Heart right ventricle (tissue), 16 donors: ENCODE measurements at regions of chr14 and their contacts with region 1.

Region 1: GRCh38 chr14:55579724-55580469 is at the start of gene KTN1:
- DNase-seq: peak; percentile 85 to 87
- ATAC-seq: peak; percentile 91 to 96 (median 94)
- H3K4me3 ChIP-seq: peak within 1 kb of the TSS; percentile 77 to 99 (median 88)
- H3K27ac ChIP-seq: peak within 1 kb of the TSS; percentile 88 to 99 (median 97)
- H3K4me1 ChIP-seq: peaks cover 0 to 51% (median 39%) of the 10 kb centered on the region in 9 donors
- H3K27me3 ChIP-seq: no peaks in the 10 kb centered on the region
- CTCF ChIP-seq: no peak
- total RNA-seq, gene KTN1: 205 to 293 (median 254) TPM

Region 2: DNA sequence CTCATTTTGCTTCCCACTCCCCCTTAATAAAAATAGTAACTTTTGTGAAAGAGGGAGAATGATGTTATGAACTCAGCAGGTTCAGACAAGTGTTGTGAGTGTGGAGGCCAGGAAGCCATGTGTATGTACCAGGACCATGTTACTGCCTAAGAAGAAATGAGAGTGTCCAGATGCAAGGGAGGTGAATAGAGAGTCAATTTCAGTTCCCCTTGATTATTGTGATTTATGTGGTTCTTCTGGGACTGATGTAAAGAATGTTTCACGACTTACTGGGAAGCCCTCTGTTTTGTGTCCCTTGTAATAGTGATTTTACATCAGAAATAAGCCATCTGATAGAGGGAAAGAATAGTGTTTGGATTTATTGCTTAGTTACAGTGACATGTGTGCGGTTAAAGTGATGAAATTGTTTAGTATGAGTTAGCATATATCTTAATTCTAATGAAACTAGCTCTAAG is 276.2 kb before region 1 on chr14:
- intact Hi-C with region 1: no loop called
- DNase-seq: no peak
- ATAC-seq: no peak
- H3K4me3 ChIP-seq: no peak overlapping the region
- H3K27ac ChIP-seq: peak overlapping the region in 3 of 10 donors; percentile 20 to 55 (median 52)
- H3K4me1 ChIP-seq: peaks cover 3 to 71% (median 43%) of the 10 kb centered on the region in 9 donors
- H3K27me3 ChIP-seq: no peaks in the 10 kb centered on the region
- CTCF ChIP-seq: no peak

Region 3: DNA sequence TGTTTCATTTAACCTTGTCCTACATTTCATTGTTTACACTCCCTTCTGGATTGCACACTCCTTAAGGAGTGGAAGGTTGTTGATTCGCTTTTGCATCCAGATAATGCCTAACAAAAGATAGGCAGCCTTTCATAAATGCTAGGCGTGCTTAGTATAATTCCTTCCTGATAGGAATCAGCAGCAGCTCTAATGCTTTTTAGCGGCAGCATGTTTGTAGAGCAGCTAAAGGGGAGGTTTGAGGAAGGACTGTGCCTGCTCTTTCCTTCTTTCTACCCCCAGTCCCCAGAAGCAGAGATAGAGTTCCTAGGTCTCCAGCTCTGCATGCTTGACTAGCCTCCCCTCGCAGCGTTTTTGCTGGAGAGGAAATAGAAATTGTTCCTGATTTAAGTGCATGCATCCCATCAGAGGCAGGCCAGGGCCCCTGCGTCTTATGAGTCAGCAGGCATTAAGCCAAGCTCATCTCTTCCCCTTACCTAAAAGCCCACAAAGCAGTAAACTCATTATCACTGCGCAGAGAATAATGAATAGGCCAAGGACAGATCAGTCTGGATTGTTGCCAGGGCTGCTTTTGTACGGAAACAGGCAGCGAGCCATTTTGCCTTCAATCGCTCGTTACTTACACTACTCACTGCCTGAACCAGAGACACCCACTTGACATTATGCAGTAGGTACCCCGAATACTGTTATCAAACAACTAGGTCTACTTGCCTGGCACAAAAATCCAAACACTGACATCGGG is 125.5 kb before region 1 on chr14:
- intact Hi-C with region 1: loop called in 7 of 10 experiments (anchors 5 to 10 kb)
- DNase-seq: peak in 1 of 2 donors; percentile 36
- ATAC-seq: peak in 7 of 8 donors; percentile 34 to 81 (median 59)
- H3K4me3 ChIP-seq: peak overlapping the region in 1 of 10 donors; percentile 20
- H3K27ac ChIP-seq: peak overlapping the region in 1 of 10 donors; percentile 37
- H3K4me1 ChIP-seq: peaks cover 0 to 37% (median 24%) of the 10 kb centered on the region in 9 donors
- H3K27me3 ChIP-seq: no peaks in the 10 kb centered on the region
- CTCF ChIP-seq: no peak

Region 4: DNA sequence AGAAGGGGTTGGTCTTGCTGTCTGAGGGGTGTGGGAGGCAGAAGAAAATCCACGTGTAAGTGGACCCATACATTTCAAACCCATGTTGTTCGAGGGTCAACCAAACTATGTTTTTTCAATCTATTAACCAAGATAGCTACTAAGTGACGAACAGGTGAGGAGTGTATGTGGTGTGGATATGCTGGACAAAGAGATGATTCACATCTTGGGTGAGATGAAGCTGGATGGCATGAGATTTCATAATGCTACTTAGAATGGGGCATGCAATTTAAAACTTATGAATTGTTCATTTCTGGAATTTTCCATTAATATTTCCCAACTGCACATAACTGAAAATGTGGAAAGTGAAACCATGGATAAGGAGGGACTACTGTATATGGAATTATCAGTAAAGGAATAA is 17.8 kb before region 1 on chr14:
- intact Hi-C with region 1: no loop called
- DNase-seq: no peak
- ATAC-seq: no peak
- H3K4me3 ChIP-seq: no peak overlapping the region
- H3K27ac ChIP-seq: no peak overlapping the region
- H3K4me1 ChIP-seq: peaks cover 0 to 9% (median 0%) of the 10 kb centered on the region in 9 donors
- H3K27me3 ChIP-seq: no peaks in the 10 kb centered on the region
- CTCF ChIP-seq: no peak

Region 5: GRCh38 chr14:55645145-55645544 is 65.2 kb after region 1 on chr14:
- intact Hi-C with region 1: loop called in 1 of 10 experiments (anchors 10 kb)
- DNase-seq: no peak
- ATAC-seq: peak in 3 of 8 donors; percentile 11 to 25 (median 12)
- H3K4me3 ChIP-seq: no peak overlapping the region
- H3K27ac ChIP-seq: no peak overlapping the region
- H3K4me1 ChIP-seq: peaks cover 0 to 30% (median 8%) of the 10 kb centered on the region in 9 donors
- H3K27me3 ChIP-seq: no peaks in the 10 kb centered on the region
- CTCF ChIP-seq: no peak

Region 6: DNA sequence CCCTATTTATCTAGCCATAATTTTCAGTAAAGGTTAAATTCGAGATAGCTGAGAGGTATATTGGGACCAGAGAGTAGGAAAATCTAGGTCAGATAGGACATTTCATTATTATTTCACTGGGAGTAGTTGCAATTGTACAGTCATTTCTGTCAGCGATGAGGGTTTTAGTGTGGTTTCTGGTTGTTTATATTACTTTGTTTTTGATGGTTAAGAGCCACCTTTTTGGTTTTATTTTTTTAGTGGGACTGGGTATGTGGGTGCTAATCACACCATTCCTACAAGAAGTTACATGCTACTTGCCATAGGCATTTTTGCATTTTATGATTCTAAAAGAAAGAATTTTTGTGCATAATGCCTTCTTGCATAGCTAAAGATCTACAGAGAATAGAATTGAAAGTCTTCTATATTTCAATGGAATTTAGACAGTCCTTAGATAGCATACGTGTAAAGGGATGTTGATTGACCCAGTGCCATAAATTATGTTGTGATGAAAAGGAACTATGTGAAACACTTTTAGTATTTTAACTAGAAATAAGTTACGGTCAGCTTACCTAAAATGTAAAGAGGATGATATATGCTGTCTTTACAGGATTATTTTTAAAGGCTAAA is 85.3 kb after region 1 on chr14:
- intact Hi-C with region 1: loop called in 3 of 10 experiments (anchors 5 to 10 kb)
- DNase-seq: no peak
- ATAC-seq: no peak
- H3K4me3 ChIP-seq: no peak overlapping the region
- H3K27ac ChIP-seq: no peak overlapping the region
- H3K4me1 ChIP-seq: peaks cover 0 to 27% (median 0%) of the 10 kb centered on the region in 9 donors
- H3K27me3 ChIP-seq: no peaks in the 10 kb centered on the region
- CTCF ChIP-seq: no peak